Calu3 (cell line): ENCODE measurements at regions of chr12 and their contacts with region 1.

Region 1: DNA sequence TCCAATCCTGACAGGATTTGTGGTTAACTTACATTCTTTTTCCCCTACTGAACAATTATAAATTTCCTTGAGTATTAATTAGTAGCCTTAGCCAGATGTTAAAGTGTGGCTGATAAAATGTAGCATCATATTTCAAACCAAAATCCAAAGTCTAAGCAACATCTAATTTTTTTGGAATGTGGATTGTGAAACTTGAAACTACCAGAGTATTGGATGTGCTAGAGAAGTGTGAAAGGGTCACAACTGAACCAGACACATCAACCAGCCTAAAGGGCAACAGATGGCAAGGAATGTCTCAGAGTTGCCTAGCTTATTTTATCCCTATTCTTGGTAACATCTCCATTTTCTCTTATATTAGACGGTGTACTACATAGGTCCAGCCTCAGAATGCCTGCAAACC is 153.1 kb upstream of the DCN start:
- DNase-seq: no peak
- H3K4me3 Mint-ChIP-seq: no peak overlapping the region
- H3K27ac Mint-ChIP-seq: no peak overlapping the region
- H3K4me1 Mint-ChIP-seq: no peaks in the 10 kb centered on the region
- H3K27me3 Mint-ChIP-seq: no peaks in the 10 kb centered on the region
- CTCF ChIP-seq: no peak

Region 2: DNA sequence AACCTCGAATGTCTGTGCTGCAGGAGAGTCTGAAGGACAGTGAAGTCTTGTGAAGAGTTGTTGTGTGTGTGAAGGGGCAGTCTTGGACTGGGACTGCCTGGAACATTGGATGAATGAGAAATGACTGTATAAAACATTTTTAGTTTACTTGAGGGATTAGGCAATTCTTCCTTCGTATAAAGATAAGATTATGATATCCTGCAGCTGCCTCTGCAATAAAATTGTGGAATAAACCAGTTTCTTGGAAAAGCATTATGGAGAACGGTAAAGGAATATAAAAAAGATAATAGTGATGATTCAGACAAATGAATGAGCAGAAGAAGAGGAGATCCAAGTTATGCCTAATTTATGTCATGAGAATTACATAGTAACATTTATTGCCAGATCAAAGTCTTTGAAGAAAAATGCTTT is 193.5 kb before region 1 on chr12:
- CTCF ChIA-PET with region 1: no interaction called
- intact Hi-C with region 1: loop called (anchors 1 kb)
- DNase-seq: no peak
- H3K4me3 Mint-ChIP-seq: no peak overlapping the region
- H3K27ac Mint-ChIP-seq: no peak overlapping the region
- H3K4me1 Mint-ChIP-seq: no peaks in the 10 kb centered on the region
- H3K27me3 Mint-ChIP-seq: no peaks in the 10 kb centered on the region
- CTCF ChIP-seq: no peak

Region 3: GRCh38 chr12:91274916-91275315 is 60.8 kb before region 1 on chr12:
- CTCF ChIA-PET with region 1: no interaction called
- intact Hi-C with region 1: no loop called
- DNase-seq: no peak
- H3K4me3 Mint-ChIP-seq: no peak overlapping the region
- H3K27ac Mint-ChIP-seq: no peak overlapping the region
- H3K4me1 Mint-ChIP-seq: no peaks in the 10 kb centered on the region
- H3K27me3 Mint-ChIP-seq: no peaks in the 10 kb centered on the region
- CTCF ChIP-seq: no peak